Mammary epithelial cell (primary cell): ENCODE measurements at regions of chr5 and their contacts with region 1.

Region 1: DNA sequence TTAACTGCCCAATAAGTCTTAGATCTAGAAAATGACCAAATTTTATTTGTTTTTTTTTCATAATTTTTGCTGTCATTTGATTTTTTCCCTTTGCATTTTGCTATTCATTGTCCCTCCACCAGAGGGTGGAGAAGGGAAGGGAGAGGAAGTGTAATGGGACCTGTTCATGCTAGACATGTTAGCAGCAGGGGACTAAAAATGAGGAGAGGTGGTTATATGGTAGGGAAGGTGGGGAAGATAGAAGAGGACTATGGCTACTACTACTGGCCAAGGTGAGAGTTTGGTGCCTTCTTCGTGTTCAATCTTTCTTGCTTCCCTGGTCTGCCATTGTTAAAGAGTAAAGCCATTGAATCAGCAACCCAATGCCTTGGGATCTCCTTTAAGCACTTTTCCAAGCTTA is 6.4 kb downstream of the GRIA1 start:
- DNase-seq: peak; percentile 22
- H3K4me3 ChIP-seq: no peak overlapping the region
- H3K27ac ChIP-seq: no peak overlapping the region
- H3K4me1 ChIP-seq: no peaks in the 10 kb centered on the region
- H3K27me3 ChIP-seq: no peaks in the 10 kb centered on the region
- CTCF ChIP-seq: peak; percentile 79 to 93

Region 2: GRCh38 chr5:152532714-152533113 is 964.1 kb before region 1 on chr5:
- CTCF ChIA-PET with region 1: no interaction called
- dilution Hi-C with region 1: no loop called
- in situ Hi-C with region 1: no loop called
- intact Hi-C with region 1: loop called (anchors 10 kb)
- DNase-seq: peak; percentile 45
- H3K4me3 ChIP-seq: no peak overlapping the region
- H3K27ac ChIP-seq: no peak overlapping the region
- H3K4me1 ChIP-seq: no peaks in the 10 kb centered on the region
- H3K27me3 ChIP-seq: no peaks in the 10 kb centered on the region
- CTCF ChIP-seq: peak; percentile 35 to 53

Region 3: GRCh38 chr5:152933056-152933455 is 563.8 kb before region 1 on chr5:
- CTCF ChIA-PET with region 1: no interaction called
- dilution Hi-C with region 1: no loop called
- in situ Hi-C with region 1: no loop called
- intact Hi-C with region 1: no loop called
- DNase-seq: no peak
- H3K4me3 ChIP-seq: no peak overlapping the region
- H3K27ac ChIP-seq: no peak overlapping the region
- H3K4me1 ChIP-seq: no peaks in the 10 kb centered on the region
- H3K27me3 ChIP-seq: no peaks in the 10 kb centered on the region
- CTCF ChIP-seq: no peak

Region 4: GRCh38 chr5:153562189-153562588 is 65.4 kb after region 1 on chr5:
- CTCF ChIA-PET with region 1: no interaction called
- dilution Hi-C with region 1: no loop called
- in situ Hi-C with region 1: no loop called
- intact Hi-C with region 1: loop called (anchors 2 kb)
- DNase-seq: peak; percentile 72
- H3K4me3 ChIP-seq: no peak overlapping the region
- H3K27ac ChIP-seq: no peak overlapping the region
- H3K4me1 ChIP-seq: peaks cover 15% of the 10 kb centered on the region
- H3K27me3 ChIP-seq: no peaks in the 10 kb centered on the region
- CTCF ChIP-seq: no peak

Region 5: DNA sequence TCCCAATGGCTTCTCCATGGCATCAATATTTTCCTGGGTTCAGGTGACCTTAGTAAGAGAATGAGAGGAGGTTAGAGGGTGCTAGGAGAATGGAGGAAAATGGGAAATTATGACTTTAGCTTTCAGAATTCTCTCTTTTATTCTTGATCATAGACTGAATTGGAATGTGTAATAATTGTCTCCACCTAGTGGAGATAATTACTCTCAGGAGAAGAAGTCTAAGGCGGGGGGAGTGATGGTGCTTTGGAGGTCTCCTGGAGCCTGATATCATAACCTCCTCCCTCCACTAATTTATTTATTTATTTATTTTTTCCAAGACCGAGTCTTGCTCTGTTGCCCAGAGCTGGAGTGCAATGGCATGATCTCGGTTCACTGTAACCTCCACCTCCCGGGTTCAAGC is 214.9 kb after region 1 on chr5:
- CTCF ChIA-PET with region 1: interaction called, 5 read pairs
- dilution Hi-C with region 1: no loop called
- in situ Hi-C with region 1: no loop called
- intact Hi-C with region 1: loop called (anchors 1 kb)
- DNase-seq: no peak
- H3K4me3 ChIP-seq: no peak overlapping the region
- H3K27ac ChIP-seq: no peak overlapping the region
- H3K4me1 ChIP-seq: no peaks in the 10 kb centered on the region
- H3K27me3 ChIP-seq: no peaks in the 10 kb centered on the region
- CTCF ChIP-seq: peak in 1 of 2 donors; percentile 30

Region 6: GRCh38 chr5:153816870-153817269 is 320.0 kb after region 1 on chr5:
- CTCF ChIA-PET with region 1: no interaction called
- dilution Hi-C with region 1: no loop called
- in situ Hi-C with region 1: no loop called
- intact Hi-C with region 1: loop called (anchors 10 kb)
- DNase-seq: no peak
- H3K4me3 ChIP-seq: no peak overlapping the region
- H3K27ac ChIP-seq: no peak overlapping the region
- H3K4me1 ChIP-seq: peaks cover 3% of the 10 kb centered on the region
- H3K27me3 ChIP-seq: no peaks in the 10 kb centered on the region
- CTCF ChIP-seq: peak in 1 of 2 donors; percentile 6